ENCODE measurements at regions of chr6 and their contacts with region 1.

Region 1: DNA sequence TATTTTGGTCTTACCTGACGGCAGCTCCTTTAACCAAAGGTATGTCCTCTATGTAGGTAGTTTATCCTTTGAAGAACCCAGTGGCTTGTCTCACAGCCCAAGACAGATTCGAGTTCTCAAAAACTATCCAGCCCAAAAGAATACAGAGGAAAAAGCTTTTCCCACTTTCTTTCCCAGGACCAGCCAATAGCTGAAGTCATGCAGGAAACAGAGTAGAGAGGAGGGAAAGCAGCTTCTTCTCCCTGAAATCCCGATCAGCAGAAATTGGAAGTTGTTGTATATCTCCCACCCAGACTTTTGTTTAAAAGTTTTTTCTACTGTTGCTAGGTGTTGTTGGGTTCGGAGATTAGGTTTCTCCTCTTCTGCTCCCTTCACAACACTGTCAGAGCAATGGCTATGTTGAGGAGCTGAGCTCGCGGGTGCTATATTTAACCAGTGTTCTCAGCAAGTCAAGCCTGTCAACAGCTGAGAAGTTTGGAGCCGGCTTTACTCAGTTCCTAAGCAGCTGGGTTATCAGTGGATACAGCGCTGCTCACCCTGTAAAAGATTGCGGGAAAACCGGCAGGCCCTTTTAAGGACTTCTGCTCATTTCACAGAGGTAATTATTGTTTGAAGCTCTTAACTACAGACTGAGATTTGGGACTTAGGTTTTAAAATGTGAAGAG is at the start of gene FILIP1:
- DNase-seq: peak; percentile 43 to 89
- H3K4me3 ChIP-seq: peak within 1 kb of the TSS; percentile 49 to 62
- H3K27ac ChIP-seq: peak within 1 kb of the TSS; percentile 78 to 86
- H3K4me1 ChIP-seq: peaks cover 0 to 10% of the 10 kb centered on the region in 2 donors
- H3K27me3 ChIP-seq: no peaks in the 10 kb centered on the region
- CTCF ChIP-seq: no peak
- total RNA-seq, gene FILIP1: 13.6 TPM

Region 2: GRCh38 chr6:75402296-75402695 is 91.2 kb before region 1 on chr6:
- intact Hi-C with region 1: loop called (anchors 1 kb)
- DNase-seq: peak; percentile 24 to 88
- H3K4me3 ChIP-seq: peak overlapping the region in 1 of 2 donors; percentile 31
- H3K27ac ChIP-seq: peak overlapping the region; percentile 76 to 78
- H3K4me1 ChIP-seq: peaks cover 3 to 34% of the 10 kb centered on the region in 2 donors
- H3K27me3 ChIP-seq: no peaks in the 10 kb centered on the region
- CTCF ChIP-seq: no peak